ENCODE measurements at regions of chr2 and their contacts with region 1.

Region 1: GRCh38 chr2:85266146-85267041 is 61.4 kb downstream of the TGOLN2 start:
- DNase-seq: peak; percentile 25
- H3K4me3 ChIP-seq: no peak overlapping the region
- H3K27ac ChIP-seq: no peak overlapping the region
- H3K4me1 ChIP-seq: peaks cover 39% of the 10 kb centered on the region
- H3K27me3 ChIP-seq: no peaks in the 10 kb centered on the region
- CTCF ChIP-seq: peak; percentile 74 to 89
- POLR2A ChIP-seq: no peak

Region 2: DNA sequence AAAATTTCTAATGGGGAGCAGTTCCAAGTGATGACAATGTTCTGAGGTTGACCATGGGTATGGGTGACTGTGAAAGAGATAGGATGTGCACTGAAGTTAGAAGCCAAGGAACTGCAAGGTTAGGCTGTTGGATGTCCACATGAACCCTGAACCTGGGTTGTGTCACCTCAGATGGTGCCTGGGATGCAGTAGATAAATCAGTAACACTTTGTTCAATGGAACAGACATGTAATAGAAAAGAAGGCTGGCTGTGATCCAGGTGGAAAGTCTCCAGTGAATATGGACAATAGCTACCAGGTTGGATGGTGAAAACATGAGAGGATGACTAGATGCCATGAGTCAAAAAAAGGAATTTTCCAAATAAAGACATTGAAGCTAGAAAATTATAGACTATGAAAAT is 517.0 kb before region 1 on chr2:
- CTCF ChIA-PET with region 1: no interaction called
- POLR2A ChIA-PET with region 1: no interaction called
- dilution Hi-C with region 1: no loop called
- intact Hi-C with region 1: no loop called
- DNase-seq: no peak
- H3K4me3 ChIP-seq: no peak overlapping the region
- H3K27ac ChIP-seq: no peak overlapping the region
- H3K4me1 ChIP-seq: no peaks in the 10 kb centered on the region
- H3K27me3 ChIP-seq: peaks cover 0 to 2% of the 10 kb centered on the region in 2 experiments
- CTCF ChIP-seq: no peak
- POLR2A ChIP-seq: no peak

Region 3: DNA sequence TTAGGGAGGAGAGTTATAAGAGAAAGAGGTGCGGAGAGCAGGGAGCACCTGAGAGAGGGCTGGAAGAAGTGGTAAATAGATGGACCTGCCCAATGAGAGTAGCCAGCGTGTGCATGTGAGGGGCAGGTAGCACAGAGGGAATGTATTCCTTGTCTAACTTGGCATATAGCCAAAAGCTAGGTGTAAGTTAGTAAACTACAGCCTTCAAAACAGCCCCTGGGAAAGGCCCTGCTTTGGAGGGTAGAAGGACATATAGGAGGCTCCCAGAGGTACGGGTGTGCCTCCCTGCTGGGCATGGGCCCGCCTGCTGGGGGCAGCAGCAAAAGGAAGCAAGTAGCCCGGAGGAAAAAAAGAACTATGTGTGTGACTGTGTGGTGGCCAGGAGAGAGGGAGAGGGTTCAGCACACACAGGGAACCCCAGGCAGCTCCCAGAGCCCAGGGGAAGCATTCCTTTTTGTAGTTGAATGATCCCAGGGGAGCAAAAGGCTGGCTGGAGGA is 85.2 kb before region 1 on chr2:
- CTCF ChIA-PET with region 1: interaction called, 8 read pairs
- POLR2A ChIA-PET with region 1: no interaction called
- dilution Hi-C with region 1: no loop called
- intact Hi-C with region 1: loop called (anchors 5 kb)
- DNase-seq: no peak
- H3K4me3 ChIP-seq: no peak overlapping the region
- H3K27ac ChIP-seq: no peak overlapping the region
- H3K4me1 ChIP-seq: peaks cover 42% of the 10 kb centered on the region
- H3K27me3 ChIP-seq: no peaks in the 10 kb centered on the region
- CTCF ChIP-seq: no peak
- POLR2A ChIP-seq: no peak

Region 4: DNA sequence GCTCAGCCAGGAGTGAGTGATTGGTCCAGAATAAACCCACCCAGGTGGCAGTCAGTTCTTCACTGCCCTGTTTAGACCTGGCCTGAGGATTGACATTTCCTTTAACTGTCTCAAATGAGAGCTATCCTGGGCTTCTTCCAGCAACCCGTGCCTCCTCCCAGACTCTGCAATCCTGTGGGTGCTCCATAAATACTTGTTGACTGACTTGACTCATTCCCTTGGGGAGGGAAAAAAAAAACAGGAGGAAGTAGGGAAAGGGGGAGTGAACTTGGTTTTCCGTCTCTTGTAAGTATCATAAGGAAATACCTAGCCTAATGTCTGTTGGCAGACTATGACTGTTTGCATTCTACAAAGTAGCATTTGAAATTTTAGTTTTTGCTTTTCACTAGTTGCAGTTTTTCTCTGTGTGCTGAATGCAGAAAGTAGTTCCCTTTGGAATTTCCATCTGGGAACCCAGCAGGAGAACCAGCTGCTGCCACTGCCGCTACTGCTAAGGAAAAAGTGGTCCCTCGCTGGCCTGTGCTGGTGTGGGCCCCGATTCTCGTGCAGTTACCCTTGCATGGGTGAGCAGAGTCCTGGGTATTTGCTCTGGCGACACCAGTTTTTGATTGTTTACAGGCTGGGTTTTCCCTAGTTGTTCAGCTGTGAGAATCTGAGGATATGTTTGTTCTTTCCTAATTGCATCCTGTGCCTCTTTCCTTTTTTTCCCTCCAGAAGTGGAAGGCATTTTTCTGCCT is 17.5 kb before region 1 on chr2:
- CTCF ChIA-PET with region 1: interaction called, 11 read pairs
- POLR2A ChIA-PET with region 1: no interaction called
- dilution Hi-C with region 1: no loop called
- intact Hi-C with region 1: no loop called
- DNase-seq: peak; percentile 72
- H3K4me3 ChIP-seq: no peak overlapping the region
- H3K27ac ChIP-seq: peak overlapping the region; percentile 6
- H3K4me1 ChIP-seq: peaks cover 30% of the 10 kb centered on the region
- H3K27me3 ChIP-seq: no peaks in the 10 kb centered on the region
- CTCF ChIP-seq: no peak
- POLR2A ChIP-seq: no peak

Region 5: DNA sequence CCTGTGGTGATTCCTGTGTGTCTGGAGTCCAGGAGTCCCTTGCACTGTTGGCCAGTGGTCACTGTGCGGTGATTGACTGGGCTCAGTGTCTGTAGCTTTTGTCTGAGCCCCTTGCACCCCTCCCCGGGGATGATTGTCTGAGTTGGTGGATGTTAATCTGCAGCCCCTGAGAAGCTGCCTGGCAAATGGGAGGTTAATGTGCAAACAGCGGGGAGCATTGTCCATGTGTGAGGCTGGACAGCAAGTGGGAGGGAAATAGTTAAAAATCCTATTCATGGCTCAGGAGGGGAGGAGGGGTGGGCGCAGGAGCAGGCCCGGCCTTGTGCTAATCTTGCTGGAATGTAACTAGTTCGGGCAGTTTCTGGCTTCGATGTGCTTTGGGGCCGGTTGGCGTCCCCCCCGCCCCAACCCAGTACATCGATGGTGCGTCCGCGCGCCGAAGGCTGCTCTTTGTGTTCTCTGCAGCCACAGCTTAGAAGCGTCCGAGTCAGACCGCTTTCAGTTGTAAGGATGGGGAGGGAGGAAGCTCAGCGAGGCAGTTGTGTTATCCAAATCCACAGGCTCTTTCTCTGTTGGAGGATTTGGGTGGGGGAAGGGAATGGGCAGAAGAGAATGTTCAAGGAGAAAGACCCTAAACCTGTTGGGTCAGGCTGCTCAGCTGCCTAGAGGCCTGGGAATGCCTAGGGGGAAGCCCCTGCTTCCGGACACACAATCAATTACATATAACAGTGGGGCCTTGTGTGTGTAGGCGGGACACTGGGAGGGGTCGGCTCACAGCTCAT is 10.4 kb before region 1 on chr2:
- CTCF ChIA-PET with region 1: interaction called, 25 read pairs
- POLR2A ChIA-PET with region 1: no interaction called
- dilution Hi-C with region 1: no loop called
- intact Hi-C with region 1: no loop called
- DNase-seq: peak; percentile 15
- H3K4me3 ChIP-seq: no peak overlapping the region
- H3K27ac ChIP-seq: no peak overlapping the region
- H3K4me1 ChIP-seq: peaks cover 32% of the 10 kb centered on the region
- H3K27me3 ChIP-seq: no peaks in the 10 kb centered on the region
- CTCF ChIP-seq: no peak
- POLR2A ChIP-seq: no peak

Region 6: GRCh38 chr2:85302121-85302520 is 35.7 kb after region 1 on chr2:
- CTCF ChIA-PET with region 1: interaction called, 9 read pairs
- POLR2A ChIA-PET with region 1: no interaction called
- dilution Hi-C with region 1: no loop called
- intact Hi-C with region 1: loop called (anchors 1 kb)
- DNase-seq: no peak
- H3K4me3 ChIP-seq: no peak overlapping the region
- H3K27ac ChIP-seq: no peak overlapping the region
- H3K4me1 ChIP-seq: no peaks in the 10 kb centered on the region
- H3K27me3 ChIP-seq: no peaks in the 10 kb centered on the region
- CTCF ChIP-seq: no peak
- POLR2A ChIP-seq: no peak